Head of caudate nucleus (tissue), 42 donors: ENCODE measurements at regions of chr6 and their contacts with region 1.

Region 1: DNA sequence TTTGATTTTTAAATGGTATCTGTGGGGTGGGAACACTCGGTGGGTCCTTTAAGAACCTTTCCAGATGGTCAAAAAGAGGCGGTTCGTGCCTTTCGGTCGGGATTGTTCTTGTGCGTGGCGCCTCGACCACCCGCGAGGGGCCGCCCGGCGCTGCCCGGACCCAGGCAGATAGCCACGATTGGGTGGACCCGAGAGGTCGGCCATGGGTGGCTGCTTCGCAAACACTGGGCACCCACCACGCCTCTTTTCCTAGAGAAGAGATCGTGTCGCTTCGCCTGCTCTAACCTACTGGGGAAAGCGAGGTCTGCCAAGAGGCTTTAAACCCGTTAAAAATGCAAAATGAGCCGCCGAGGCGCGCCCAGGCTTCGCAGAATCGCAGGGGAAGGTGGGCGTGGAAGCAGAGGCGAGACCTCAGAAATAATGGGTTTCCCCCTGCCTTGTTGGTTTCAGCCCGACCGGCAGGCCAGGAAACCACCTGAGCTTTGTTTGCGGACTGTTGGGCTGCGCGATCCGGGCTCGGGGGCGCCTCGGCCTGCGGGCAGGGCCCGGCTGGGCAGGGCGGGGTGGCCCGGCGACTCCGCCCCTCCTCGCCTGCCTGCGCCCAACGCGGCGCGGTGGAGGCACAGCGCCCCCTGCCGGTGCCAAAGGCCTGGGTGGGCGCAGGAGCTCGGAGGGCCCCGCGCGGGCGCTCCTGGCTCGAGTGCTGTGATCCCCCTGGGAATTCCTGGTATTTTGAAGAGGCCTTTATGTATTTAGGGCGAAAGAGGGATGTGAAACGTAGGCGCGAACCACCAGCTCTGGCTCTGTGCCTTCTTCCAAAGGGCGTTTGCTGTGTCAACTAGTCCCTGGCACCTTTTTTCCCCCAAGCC is 1.6 kb downstream of the MARCKS start:
- DNase-seq: peak; percentile 56 to 94 (median 89)

Region 2: DNA sequence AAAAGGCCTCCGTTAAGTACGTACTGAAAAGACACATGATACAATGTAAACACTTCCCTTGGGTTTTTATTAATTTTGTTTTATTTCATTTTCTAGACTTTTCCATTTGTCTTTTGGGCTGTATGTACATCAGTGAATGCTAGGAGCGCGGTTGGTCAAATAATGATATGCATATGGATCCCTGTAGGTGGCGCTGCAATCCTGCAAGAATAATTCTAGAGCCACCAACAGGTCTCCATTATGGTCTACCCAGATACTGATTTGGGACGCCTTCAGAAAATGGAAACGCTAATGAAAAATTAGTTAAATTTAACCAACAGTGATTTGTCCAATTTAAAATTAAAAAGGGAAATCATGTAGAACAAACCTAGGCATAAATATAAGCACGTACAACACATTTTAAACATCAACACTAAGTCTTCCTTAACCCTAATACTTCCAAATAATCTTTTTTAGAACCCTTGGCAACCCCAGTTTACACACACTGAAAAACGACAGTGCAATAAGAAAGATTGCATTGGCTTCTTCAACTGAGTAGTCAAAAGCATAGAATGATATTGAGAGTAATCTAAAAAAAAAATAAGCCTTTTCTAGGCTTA is 1078.1 kb before region 1 on chr6:
- intact Hi-C with region 1: loop called (anchors 5 kb)
- DNase-seq: peak; percentile 21 to 91 (median 78)

Region 3: GRCh38 chr6:113182370-113183141 is 676.2 kb before region 1 on chr6:
- intact Hi-C with region 1: loop called (anchors 10 kb)
- DNase-seq: no peak

Region 4: GRCh38 chr6:113564371-113565161 is 294.1 kb before region 1 on chr6:
- intact Hi-C with region 1: loop called (anchors 10 kb)
- DNase-seq: peak; percentile 42 to 89 (median 74)

Region 5: GRCh38 chr6:114080891-114081510 is 222.3 kb after region 1 on chr6:
- intact Hi-C with region 1: no loop called
- DNase-seq: no peak